Posterior vena cava (tissue), 2 donors: ENCODE measurements at regions of chr11 and their contacts with region 1.

Region 1: DNA sequence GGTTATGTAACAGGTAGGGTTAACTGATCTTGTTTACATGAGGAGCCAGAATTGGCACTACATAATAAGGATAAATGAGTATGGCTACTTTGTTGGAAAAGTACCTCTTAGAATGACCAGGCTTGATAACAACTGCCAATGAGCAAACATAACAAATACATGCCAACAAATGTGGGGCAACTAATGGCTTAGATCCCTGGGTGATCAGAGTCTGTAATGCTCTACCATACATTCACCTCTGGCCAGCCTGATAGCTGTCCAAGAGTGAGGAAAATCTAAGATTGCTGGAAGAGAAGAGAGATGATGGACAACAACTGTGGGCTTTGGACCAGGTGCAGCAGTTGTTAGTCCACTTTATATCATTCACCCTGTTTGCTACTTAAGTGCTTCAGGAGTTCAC is 1025.0 kb downstream of the NTM start:
- DNase-seq: no peak

Region 2: DNA sequence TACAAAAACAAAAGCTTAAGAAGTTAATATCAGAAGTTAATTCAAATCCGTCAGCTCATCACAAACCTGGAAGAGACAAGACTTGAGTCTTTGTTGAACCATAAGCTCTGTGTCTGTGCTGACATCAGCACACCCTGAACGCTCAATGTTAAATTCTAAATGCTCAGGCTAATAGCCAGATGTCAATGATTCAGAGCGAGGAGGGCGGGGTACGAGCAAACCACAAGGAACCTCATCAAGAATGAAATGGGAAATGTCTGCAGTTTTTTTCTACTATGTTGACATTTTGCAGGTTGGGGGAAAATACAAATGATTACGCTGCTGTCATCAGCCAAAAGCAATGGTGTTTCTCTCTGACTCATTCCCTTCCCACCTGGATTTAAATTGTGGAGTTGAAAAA is 32.2 kb after region 1 on chr11:
- intact Hi-C with region 1: loop called in 1 of 2 experiments (anchors 2 kb)
- DNase-seq: no peak